WTC11 (cell line): ENCODE measurements at regions of chr11 and their contacts with region 1.

Region 1: DNA sequence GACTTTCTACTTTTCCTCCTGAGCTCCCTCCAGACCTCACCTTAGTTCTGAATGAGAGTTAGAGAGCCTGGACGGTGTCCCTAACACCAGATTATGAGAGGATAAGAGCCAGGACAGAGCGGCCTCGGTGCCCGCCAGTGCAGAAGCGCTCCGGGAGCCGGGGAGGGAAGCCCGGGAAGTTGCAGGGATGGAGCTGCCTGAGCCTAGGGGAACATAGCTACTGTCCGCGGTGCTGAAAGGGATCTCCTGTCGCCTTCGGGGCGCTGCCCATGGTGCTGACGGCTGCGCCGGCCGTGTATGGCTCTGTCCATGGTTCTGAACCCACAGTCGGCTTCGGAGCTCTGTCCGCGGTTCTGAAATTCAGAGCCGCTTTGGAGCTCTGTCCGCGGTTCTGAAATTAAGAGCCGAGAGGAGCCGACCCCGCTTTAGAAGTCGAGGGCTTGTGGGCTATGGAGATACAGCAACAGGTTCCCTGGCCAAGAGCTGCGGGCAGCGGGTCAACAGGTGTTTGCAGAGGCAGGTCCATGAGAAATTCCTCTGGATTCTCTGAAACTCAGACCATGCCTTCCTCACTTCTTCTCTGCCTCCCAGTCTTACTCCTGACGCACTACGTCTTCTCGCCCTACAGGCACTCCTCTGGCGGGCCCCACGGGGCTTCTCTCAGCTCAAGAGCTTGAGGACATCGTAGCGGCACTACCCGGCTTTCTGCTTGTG is 814 bp downstream of the NPAS4 start:
- DNase-seq: peak; percentile 95
- ATAC-seq: peak; percentile 55
- H3K4me3 Mint-ChIP-seq: peak overlapping the region; percentile 68
- H3K27ac Mint-ChIP-seq: no peak overlapping the region
- H3K4me1 Mint-ChIP-seq: peaks cover 27% of the 10 kb centered on the region
- H3K27me3 Mint-ChIP-seq: peaks cover 77% of the 10 kb centered on the region
- CTCF ChIP-seq: no peak

Region 2: DNA sequence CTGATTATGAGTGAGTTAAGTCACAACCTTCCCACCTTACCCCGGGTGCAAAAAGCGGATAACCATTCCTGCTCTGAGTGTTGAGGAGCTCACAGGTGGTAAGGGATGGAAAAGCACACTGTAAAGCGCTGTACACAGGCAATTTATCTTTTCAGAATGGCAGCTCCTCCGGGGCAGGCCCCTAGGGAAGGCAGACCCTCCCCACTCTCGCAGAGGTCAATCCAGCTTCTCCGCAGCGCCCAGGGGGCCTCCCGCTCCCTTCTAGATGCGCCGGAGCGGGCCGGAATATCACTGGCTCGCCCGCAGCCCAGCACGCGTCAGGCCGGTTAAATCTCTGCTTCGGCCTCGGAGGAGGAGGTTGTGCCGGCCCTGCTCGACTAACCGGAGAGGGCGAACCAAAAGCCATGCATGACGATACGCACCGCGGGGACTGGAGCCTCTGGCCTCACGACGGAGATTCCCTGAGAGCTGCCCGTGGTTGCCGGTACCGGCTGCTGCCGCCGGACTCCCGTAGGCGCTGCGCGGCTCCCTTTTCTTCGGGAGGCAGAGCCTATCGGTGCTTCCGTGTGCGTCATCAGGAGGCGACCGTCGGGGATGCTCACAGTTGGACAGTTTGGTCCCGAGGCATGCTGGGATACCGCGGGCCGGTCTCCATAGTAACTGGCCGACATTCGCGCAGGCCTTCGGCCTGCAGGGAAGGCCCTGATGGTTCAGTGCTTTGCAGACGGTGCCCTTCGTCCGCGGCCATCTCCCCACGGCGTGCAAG is 76.9 kb before region 1 on chr11 and contains the start of gene BRMS1:
- CTCF ChIA-PET with region 1: no interaction called
- POLR2A ChIA-PET with region 1: interaction called, 14 read pairs
- DNase-seq: peak; percentile 98
- ATAC-seq: peak; percentile 53
- H3K4me3 Mint-ChIP-seq: peak within 1 kb of the TSS; percentile 96
- H3K27ac Mint-ChIP-seq: peak within 1 kb of the TSS; percentile 95
- H3K4me1 Mint-ChIP-seq: peaks cover 26% of the 10 kb centered on the region
- H3K27me3 Mint-ChIP-seq: peaks cover 4% of the 10 kb centered on the region; the same call in 1 of the 2 replicates
- CTCF ChIP-seq: no peak
- total RNA-seq, gene BRMS1: 37.0 to 44.5 TPM (median 40.8 TPM) in 3 replicates

Region 3: GRCh38 chr11:66408488-66409214 is 13.0 kb before region 1 on chr11:
- CTCF ChIA-PET with region 1: interaction called, 51 read pairs
- POLR2A ChIA-PET with region 1: interaction called, 9 read pairs
- DNase-seq: peak; percentile 97
- ATAC-seq: peak; percentile 76
- H3K4me3 Mint-ChIP-seq: peak overlapping the region; percentile 66
- H3K27ac Mint-ChIP-seq: no peak overlapping the region
- H3K4me1 Mint-ChIP-seq: peaks cover 10% of the 10 kb centered on the region
- H3K27me3 Mint-ChIP-seq: peaks cover 34% of the 10 kb centered on the region
- CTCF ChIP-seq: peak; percentile 99

Region 4: DNA sequence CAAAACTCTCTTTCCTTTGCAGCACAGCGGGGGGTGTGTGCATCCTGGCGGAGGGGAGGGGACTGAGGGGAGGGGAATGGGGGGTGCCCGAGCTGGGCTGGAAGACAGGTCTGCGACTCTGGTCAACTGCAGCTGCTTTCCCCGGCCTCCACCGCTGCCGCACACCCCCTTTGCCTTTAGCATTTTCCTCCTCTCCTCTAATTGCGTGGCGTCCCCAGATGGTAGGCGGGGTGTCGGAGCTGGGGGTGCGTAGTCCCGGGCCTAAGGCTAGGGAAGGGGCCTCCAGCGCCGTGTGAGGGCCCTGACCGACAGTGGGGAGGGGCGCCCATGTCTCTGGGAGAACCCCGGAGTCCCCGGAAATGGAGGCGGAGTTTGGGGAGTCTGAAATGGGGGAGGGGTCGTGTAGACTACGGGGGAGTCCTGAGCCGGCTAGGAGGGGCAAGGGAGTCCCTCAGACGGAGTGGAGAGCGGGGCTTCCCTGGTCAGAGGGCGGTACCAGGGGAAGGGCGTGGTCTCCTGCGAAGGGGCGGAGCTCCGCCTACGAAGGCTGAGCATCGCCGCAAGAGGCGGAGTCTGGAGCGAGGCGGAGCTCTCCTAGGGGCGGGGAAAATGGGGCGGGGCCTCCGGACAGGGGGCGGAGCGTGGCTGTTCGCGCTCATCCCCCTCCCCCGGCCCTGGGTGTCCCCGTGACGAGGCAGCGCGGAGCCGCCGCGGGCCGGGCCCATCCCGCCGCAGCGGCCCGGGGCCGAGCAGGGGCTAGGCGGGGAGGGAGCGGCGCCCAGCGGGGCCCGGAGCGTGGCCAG is 44.8 kb after region 1 on chr11 and contains the start of gene PELI3:
- CTCF ChIA-PET with region 1: interaction called, 17 read pairs
- POLR2A ChIA-PET with region 1: interaction called, 3 read pairs
- DNase-seq: peak; percentile 98
- ATAC-seq: peak; percentile 94
- H3K4me3 Mint-ChIP-seq: peak within 1 kb of the TSS; percentile 88
- H3K27ac Mint-ChIP-seq: peak within 1 kb of the TSS; percentile 90
- H3K4me1 Mint-ChIP-seq: peaks cover 43% of the 10 kb centered on the region
- H3K27me3 Mint-ChIP-seq: no peaks in the 10 kb centered on the region; the same call in 1 of the 2 replicates
- CTCF ChIP-seq: no peak
- total RNA-seq, gene PELI3: 6.7 to 7.8 TPM (median 6.8 TPM) in 3 replicates